ENCODE measurements at regions of chr10 and their contacts with region 1.

Region 1: GRCh38 chr10:3776796-3777571 is 8.0 kb downstream of the KLF6 start:
- DNase-seq: peak in 7 of 9 donors; percentile 41 to 84 (median 67)
- ATAC-seq: peak; percentile 31
- H3K4me3 ChIP-seq: no peak overlapping the region
- H3K4me3 Mint-ChIP-seq: peak overlapping the region in 9 of 10 donors; percentile 7 to 81 (median 51)
- H3K27ac ChIP-seq: peak overlapping the region; percentile 70
- H3K27ac Mint-ChIP-seq: peak overlapping the region; percentile 59 to 99 (median 83)
- H3K4me1 ChIP-seq: peaks cover 53 to 71% of the 10 kb centered on the region in 2 donors
- H3K4me1 Mint-ChIP-seq: peaks cover 50 to 66% (median 64%) of the 10 kb centered on the region in 7 donors
- H3K27me3 ChIP-seq: no peaks in the 10 kb centered on the region
- H3K27me3 Mint-ChIP-seq: no peaks in the 10 kb centered on the region

Region 2: GRCh38 chr10:3452173-3452626 is 324.8 kb before region 1 on chr10:
- CTCF ChIA-PET with region 1: interaction called, 3 read pairs
- POLR2A ChIA-PET with region 1: interaction called, 59 read pairs
- intact Hi-C with region 1: loop called (anchors 2 to 5 kb)
- DNase-seq: peak in 6 of 9 donors; percentile 18 to 56 (median 24)
- ATAC-seq: no peak
- H3K4me3 ChIP-seq: no peak overlapping the region
- H3K4me3 Mint-ChIP-seq: peak overlapping the region in 1 of 10 donors; percentile 57
- H3K27ac ChIP-seq: peak overlapping the region; percentile 51
- H3K27ac Mint-ChIP-seq: peak overlapping the region in 8 of 9 donors; percentile 16 to 88 (median 78)
- H3K4me1 ChIP-seq: peaks cover 0 to 38% of the 10 kb centered on the region in 2 donors
- H3K4me1 Mint-ChIP-seq: peaks cover 7 to 48% (median 36%) of the 10 kb centered on the region in 7 donors
- H3K27me3 ChIP-seq: peaks cover 0 to 6% of the 10 kb centered on the region in 2 donors
- H3K27me3 Mint-ChIP-seq: peaks cover 0 to 32% (median 0%) of the 10 kb centered on the region in 5 donors

Region 3: DNA sequence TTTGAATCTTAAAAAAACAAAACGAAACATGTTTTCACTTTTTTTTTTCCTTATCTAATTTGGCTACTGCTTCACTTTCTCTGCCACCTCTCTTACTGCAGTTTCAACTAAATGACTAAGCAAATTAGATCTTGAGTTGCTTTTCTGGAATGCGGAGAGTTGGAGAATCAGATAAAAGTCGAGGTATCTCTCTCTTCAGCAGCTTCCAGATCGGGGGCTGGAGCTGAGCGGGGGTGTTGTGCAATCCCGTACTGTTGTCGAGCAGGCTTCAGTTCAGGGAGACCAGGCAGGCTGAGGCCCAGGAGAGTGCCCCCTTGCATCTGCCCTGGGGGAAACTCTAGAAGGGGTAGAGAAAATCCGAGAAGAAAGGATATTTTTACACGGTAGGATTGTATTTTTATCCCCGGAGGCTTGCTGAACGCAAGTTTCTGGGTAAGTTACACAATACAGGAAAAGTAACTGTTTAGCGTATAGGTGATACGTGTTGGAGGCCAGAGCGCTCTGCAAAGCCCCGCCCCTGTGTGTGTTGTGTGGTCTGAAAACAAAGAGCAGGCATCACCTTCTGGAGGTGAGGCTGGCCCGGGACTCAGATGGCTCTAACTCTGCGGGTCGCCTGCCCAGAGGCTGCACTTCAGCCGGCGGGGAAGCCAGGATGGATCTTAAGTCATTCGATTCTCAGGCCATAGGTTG is 108.6 kb before region 1 on chr10:
- CTCF ChIA-PET with region 1: no interaction called
- POLR2A ChIA-PET with region 1: interaction called, 11 read pairs
- intact Hi-C with region 1: loop called (anchors 1 to 5 kb)
- DNase-seq: peak; percentile 34 to 85 (median 77)
- ATAC-seq: peak; percentile 91
- H3K4me3 ChIP-seq: peak overlapping the region; percentile 63
- H3K4me3 Mint-ChIP-seq: peak overlapping the region; percentile 82 to 98 (median 88)
- H3K27ac ChIP-seq: peak overlapping the region; percentile 65
- H3K27ac Mint-ChIP-seq: peak overlapping the region; percentile 36 to 96 (median 93)
- H3K4me1 ChIP-seq: peaks cover 33% of the 10 kb centered on the region in 2 donors
- H3K4me1 Mint-ChIP-seq: peaks cover 27 to 51% (median 40%) of the 10 kb centered on the region in 7 donors
- H3K27me3 ChIP-seq: no peaks in the 10 kb centered on the region
- H3K27me3 Mint-ChIP-seq: no peaks in the 10 kb centered on the region

Region 4: GRCh38 chr10:3811291-3811870 is 34.4 kb after region 1 on chr10:
- CTCF ChIA-PET with region 1: no interaction called
- POLR2A ChIA-PET with region 1: interaction called, 401 read pairs
- intact Hi-C with region 1: loop called in 1 of 2 experiments (anchors 5 kb)
- DNase-seq: peak in 6 of 9 donors; percentile 22 to 54 (median 32)
- ATAC-seq: peak; percentile 62
- H3K4me3 ChIP-seq: peak overlapping the region; percentile 33
- H3K4me3 Mint-ChIP-seq: peak overlapping the region; percentile 10 to 85 (median 70)
- H3K27ac ChIP-seq: peak overlapping the region; percentile 71
- H3K27ac Mint-ChIP-seq: peak overlapping the region in 6 of 9 donors; percentile 67 to 91 (median 88)
- H3K4me1 ChIP-seq: peaks cover 52 to 65% of the 10 kb centered on the region in 2 donors
- H3K4me1 Mint-ChIP-seq: peaks cover 41 to 80% (median 63%) of the 10 kb centered on the region in 7 donors
- H3K27me3 ChIP-seq: no peaks in the 10 kb centered on the region
- H3K27me3 Mint-ChIP-seq: no peaks in the 10 kb centered on the region